Activated CD8-positive, alpha-beta T cell treated with anti-CD3 and anti-CD28 coated beads for 36 hours (primary cell): ENCODE measurements at regions of chr2 and their contacts with region 1.

Region 1: DNA sequence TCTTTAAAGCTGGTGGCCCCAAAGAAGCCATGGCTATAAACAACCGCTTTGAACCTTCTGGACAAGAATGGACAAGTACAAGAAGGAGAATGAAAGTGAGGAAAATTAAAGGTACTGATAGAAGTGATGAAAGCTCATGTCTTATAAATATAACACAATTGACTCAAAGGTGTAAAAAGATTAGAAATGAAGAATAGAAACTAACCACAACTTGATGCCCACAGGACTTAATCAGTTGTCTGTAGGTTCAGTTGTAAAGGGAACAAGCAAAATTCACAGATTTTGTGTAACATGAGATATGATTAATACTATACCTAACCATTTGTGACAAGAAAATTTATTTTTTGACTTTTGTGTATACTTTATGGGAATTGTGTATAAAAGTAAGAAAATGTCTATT is 135.7 kb downstream of the NUP35 start:
- DNase-seq: no peak
- ATAC-seq: no peak
- H3K4me3 Mint-ChIP-seq: no peak overlapping the region
- H3K27ac Mint-ChIP-seq: no peak overlapping the region
- H3K4me1 Mint-ChIP-seq: no peaks in the 10 kb centered on the region
- H3K27me3 Mint-ChIP-seq: no peaks in the 10 kb centered on the region
- CTCF ChIP-seq: no peak

Region 2: GRCh38 chr2:183248866-183249567 is 10.9 kb before region 1 on chr2:
- CTCF ChIA-PET with region 1: interaction called, 13 read pairs
- POLR2A ChIA-PET with region 1: no interaction called
- intact Hi-C with region 1: no loop called
- DNase-seq: no peak
- ATAC-seq: no peak
- H3K4me3 Mint-ChIP-seq: no peak overlapping the region
- H3K27ac Mint-ChIP-seq: no peak overlapping the region
- H3K4me1 Mint-ChIP-seq: no peaks in the 10 kb centered on the region
- H3K27me3 Mint-ChIP-seq: peaks cover 5% of the 10 kb centered on the region
- CTCF ChIP-seq: peak; percentile 47

Region 3: DNA sequence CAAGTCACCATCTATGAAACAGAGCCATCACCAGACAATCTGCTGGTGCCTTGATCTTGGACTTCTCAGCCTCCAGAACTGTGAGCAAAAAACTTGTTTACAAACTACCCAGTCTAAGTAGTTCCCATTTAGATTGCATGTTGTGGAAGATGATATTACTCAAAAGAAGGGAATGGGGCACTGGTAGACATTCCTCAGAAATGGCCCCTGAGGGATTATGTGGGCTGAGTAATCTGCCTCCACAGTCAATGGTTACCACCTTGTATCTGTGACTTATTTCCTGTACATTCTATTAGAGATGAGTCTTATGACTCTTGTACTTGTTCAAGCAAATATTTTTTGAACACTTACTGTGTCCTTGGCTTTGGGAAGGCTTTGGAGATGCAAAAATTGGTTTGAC is 24.7 kb after region 1 on chr2:
- CTCF ChIA-PET with region 1: no interaction called
- POLR2A ChIA-PET with region 1: no interaction called
- intact Hi-C with region 1: no loop called
- DNase-seq: no peak
- ATAC-seq: no peak
- H3K4me3 Mint-ChIP-seq: no peak overlapping the region
- H3K27ac Mint-ChIP-seq: no peak overlapping the region
- H3K4me1 Mint-ChIP-seq: no peaks in the 10 kb centered on the region
- H3K27me3 Mint-ChIP-seq: peaks cover 1% of the 10 kb centered on the region
- CTCF ChIP-seq: no peak